ENCODE measurements at regions of chr9 and their contacts with region 1.

Region 1: DNA sequence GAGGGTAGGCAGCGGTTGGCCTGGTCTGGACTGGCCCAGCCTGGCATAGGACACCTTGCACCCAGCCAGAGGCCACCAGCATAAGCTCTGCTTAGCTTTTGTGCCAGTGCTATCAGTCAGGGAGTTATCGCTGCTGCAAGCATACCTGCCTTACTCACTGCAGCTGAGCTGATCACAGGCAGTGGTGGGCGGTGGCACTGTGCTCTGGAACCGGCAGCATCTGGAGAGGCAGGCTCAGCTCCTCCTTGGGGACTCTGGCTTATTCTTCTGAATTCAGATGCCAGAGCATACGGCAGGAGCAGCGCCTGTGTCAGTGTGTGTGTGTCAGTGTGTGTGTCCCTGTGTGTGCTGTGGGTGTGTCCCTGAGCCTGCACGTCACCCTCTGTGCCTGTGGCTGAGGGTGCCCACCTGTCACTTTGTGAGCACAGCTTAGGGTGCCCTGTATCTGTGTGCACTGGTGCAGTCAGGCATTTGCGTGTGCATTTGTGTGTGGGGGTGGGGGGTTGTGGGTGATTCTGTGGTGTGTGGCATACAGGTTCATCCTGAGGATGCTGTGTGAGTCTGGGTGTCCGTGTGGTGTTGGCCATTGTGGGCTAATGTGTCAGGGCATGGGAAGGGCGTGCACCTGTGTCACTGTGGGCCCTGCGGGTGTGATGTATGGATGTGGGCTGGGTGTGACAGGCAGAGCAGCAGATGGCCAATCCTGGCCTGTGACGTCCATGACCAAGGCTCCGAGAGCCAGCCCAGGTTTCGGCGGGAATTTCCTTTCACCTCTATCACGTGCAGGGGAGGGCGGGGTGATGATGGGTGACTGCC is 23.5 kb downstream of the LMX1B start:
- DNase-seq: peak; percentile 83 to 87
- ATAC-seq: peak; percentile 77 to 91 (median 87)
- H3K4me3 ChIP-seq: no peak overlapping the region
- H3K4me3 Mint-ChIP-seq: peak overlapping the region; percentile 74
- H3K27ac ChIP-seq: peak overlapping the region; percentile 61
- H3K27ac Mint-ChIP-seq: peak overlapping the region; percentile 81 to 92
- H3K4me1 ChIP-seq: peaks cover 52% of the 10 kb centered on the region
- H3K4me1 Mint-ChIP-seq: peaks cover 28 to 40% of the 10 kb centered on the region in 2 donors
- H3K27me3 ChIP-seq: peaks cover 31% of the 10 kb centered on the region
- H3K27me3 Mint-ChIP-seq: peaks cover 32 to 42% of the 10 kb centered on the region in 2 donors
- CTCF ChIP-seq: no peak

Region 2: DNA sequence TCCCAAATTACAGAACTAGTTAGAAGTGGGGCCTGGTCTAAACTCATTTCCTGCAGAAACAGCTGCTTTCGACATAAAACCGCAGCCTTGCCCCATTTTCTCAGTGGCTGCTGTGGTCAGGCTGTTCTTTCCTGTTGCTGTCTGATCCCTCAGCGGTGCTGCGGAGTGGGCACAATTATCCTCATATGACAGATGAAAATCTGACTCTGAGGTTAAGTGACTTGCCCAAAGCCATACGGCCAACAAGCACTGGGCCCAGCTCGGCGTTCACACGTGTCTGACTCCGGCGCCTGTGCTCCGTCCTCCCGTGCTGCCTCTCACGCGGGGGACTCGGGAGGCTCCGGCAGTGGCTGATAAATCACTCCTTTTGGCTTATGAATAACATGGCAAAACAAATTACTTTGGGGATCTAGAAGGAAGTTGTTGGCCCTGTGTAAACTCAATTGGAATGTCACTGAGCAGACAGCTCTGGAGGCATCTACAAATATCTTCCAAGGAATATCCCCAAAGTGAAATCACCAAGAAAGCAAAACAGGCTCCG is 166.0 kb before region 1 on chr9:
- intact Hi-C with region 1: loop called (anchors 5 kb)
- DNase-seq: peak; percentile 78 to 90
- ATAC-seq: peak; percentile 68 to 87 (median 81)
- H3K4me3 ChIP-seq: no peak overlapping the region
- H3K4me3 Mint-ChIP-seq: peak overlapping the region; percentile 82
- H3K27ac ChIP-seq: peak overlapping the region; percentile 86
- H3K27ac Mint-ChIP-seq: peak overlapping the region; percentile 93 to 94
- H3K4me1 ChIP-seq: peaks cover 68% of the 10 kb centered on the region
- H3K4me1 Mint-ChIP-seq: peaks cover 72 to 74% of the 10 kb centered on the region in 2 donors
- H3K27me3 ChIP-seq: no peaks in the 10 kb centered on the region
- H3K27me3 Mint-ChIP-seq: peaks cover 0 to 12% of the 10 kb centered on the region in 2 donors
- CTCF ChIP-seq: no peak

Region 3: GRCh38 chr9:126822278-126822677 is 185.1 kb after region 1 on chr9:
- intact Hi-C with region 1: no loop called
- DNase-seq: no peak
- ATAC-seq: no peak
- H3K4me3 ChIP-seq: no peak overlapping the region
- H3K4me3 Mint-ChIP-seq: no peak overlapping the region
- H3K27ac ChIP-seq: no peak overlapping the region
- H3K27ac Mint-ChIP-seq: peak overlapping the region in 1 of 2 donors; percentile 51
- H3K4me1 ChIP-seq: no peaks in the 10 kb centered on the region
- H3K4me1 Mint-ChIP-seq: peaks cover 35 to 37% of the 10 kb centered on the region in 2 donors
- H3K27me3 ChIP-seq: no peaks in the 10 kb centered on the region
- H3K27me3 Mint-ChIP-seq: no peaks in the 10 kb centered on the region
- CTCF ChIP-seq: no peak

Measured in natural killer cell (primary cell).